Activated naive CD4-positive, alpha-beta T cell treated with anti-CD3 and anti-CD28 coated beads for 36 hours (primary cell): ENCODE measurements at regions of chr14 and their contacts with region 1.

Region 1: GRCh38 chr14:74905375-74906142 is 17.5 kb downstream of the RPS6KL1 start:
- DNase-seq: peak; percentile 87
- H3K4me3 Mint-ChIP-seq: no peak overlapping the region
- H3K27ac Mint-ChIP-seq: no peak overlapping the region
- H3K4me1 Mint-ChIP-seq: peaks cover 5% of the 10 kb centered on the region
- H3K27me3 Mint-ChIP-seq: no peaks in the 10 kb centered on the region

Region 2: GRCh38 chr14:74860906-74861733 is 44.4 kb before region 1 on chr14:
- CTCF ChIA-PET with region 1: interaction called, 379 read pairs
- intact Hi-C with region 1: loop called (anchors 1 kb)
- DNase-seq: peak; percentile 97
- H3K4me3 Mint-ChIP-seq: no peak overlapping the region
- H3K27ac Mint-ChIP-seq: no peak overlapping the region
- H3K4me1 Mint-ChIP-seq: peaks cover 2% of the 10 kb centered on the region
- H3K27me3 Mint-ChIP-seq: no peaks in the 10 kb centered on the region

Region 3: DNA sequence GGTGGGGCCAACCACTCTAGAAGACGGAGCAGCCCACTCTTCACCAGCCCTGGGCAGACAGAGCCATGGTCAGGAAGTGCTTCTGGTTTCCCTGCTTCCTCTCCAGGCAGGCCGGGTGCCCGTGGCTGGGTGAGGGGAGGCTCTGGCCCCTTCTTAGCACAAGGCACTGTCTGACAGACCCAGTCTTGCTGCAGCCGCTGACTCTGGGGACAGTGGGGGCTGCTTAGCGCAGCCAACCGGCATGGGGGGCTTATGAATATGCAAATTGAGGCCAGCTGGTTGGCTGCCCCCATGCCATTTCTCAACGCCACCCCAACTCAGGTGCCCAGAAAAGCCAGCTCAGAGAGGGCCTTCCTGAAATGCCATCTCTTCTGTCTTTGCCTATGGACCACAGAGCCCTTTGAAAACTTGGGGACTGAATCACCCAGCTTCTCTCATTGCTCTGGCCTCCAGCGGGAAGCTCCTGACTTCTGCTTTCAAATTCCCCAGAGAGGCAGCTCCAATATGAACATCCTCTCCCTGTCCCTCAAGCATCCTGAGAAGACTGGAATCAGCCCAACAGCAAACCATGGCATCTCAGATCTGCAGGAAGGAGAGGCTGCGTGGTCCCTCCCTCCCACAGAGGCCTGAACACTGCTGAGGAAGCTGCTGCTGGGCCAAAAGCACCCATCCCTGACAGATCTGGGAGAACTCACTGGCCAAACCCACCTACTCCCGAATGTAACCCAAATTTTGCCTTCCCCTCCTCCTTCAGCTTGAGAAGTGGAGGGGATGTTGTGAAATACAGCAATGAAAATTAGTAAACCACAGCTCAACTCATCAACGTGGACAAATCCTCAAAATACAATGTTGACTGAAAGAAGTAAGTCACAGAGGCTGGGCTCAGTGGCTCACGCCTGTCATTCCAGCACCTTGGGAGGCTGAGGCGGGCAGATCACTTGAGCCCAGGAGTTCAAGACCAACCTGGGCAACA is 29.3 kb before region 1 on chr14 and contains the start of gene PROX2:
- CTCF ChIA-PET with region 1: interaction called, 45 read pairs
- intact Hi-C with region 1: loop called (anchors 1 kb)
- DNase-seq: peak; percentile 30
- H3K4me3 Mint-ChIP-seq: peak within 1 kb of the TSS; percentile 40
- H3K27ac Mint-ChIP-seq: no peak within 1 kb of the TSS
- H3K4me1 Mint-ChIP-seq: peaks cover 38% of the 10 kb centered on the region
- H3K27me3 Mint-ChIP-seq: no peaks in the 10 kb centered on the region
- total RNA-seq, gene PROX2: 0.07 to 0.41 TPM

Region 4: DNA sequence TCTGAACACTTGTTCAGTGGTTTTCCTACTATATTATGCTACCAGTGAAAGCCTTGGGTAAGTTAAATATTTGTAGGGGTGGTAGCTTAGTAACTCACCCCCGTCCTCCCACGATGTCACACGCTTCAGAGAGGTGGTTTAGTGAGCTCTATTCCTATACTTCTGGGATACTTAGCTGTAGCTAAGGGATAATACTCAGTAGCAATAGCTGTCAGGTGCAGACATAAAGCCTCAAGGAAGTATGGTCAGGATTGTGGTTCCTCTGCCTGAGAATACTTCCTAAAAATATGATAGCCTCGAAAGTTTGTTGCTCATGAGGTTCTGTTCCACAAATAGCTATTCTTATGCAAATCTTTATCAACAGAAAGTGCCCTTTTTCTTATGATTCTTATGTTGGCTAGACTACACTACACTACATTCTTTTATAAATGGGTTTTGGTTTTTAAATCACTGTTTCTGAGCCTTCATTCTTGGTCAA is 11.9 kb before region 1 on chr14:
- CTCF ChIA-PET with region 1: interaction called, 75 read pairs
- intact Hi-C with region 1: no loop called
- DNase-seq: no peak
- H3K4me3 Mint-ChIP-seq: no peak overlapping the region
- H3K27ac Mint-ChIP-seq: peak overlapping the region; percentile 16
- H3K4me1 Mint-ChIP-seq: no peaks in the 10 kb centered on the region
- H3K27me3 Mint-ChIP-seq: no peaks in the 10 kb centered on the region

Region 5: GRCh38 chr14:74929242-74929641 is 23.7 kb after region 1 on chr14:
- CTCF ChIA-PET with region 1: interaction called, 18 read pairs
- intact Hi-C with region 1: no loop called
- DNase-seq: no peak
- H3K4me3 Mint-ChIP-seq: no peak overlapping the region
- H3K27ac Mint-ChIP-seq: no peak overlapping the region
- H3K4me1 Mint-ChIP-seq: peaks cover 10% of the 10 kb centered on the region
- H3K27me3 Mint-ChIP-seq: no peaks in the 10 kb centered on the region

Region 6: DNA sequence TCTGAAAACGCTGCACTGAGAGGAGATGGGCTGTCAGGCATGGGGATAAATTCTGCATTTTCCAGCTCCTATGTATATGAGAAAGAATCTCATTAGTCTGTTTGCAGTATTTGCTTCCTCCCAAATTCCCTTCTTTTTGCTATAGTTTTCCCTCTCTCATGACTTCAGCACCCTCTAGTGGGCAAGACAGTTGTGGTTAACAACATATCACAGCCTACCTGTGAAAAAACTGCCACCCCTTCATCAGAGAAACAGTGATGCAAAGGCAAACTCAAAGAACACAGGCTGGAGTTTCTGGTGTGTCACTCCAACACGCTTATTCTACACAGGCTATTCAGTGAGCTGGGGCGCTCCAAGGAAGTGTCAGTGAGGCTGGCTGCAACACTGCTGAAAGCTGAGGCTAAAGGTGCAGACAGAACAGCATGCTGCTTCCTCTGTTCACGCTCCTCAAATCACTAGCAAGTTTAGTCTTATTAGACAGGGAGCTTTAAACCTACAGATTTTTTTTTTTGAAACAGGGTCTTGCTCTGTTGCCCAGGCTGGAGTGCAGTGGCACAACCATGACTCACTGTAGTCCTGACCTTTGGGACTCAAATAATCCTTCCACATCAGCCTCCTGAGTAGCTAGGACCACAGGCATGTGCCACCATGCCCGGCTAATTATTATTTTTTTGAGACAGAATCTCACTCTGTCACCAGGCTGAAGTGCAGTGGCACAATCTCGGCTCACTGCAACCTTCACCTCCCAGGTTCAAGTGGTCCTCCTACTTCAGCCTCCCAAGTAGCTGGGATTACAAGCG is 183.2 kb after region 1 on chr14:
- CTCF ChIA-PET with region 1: interaction called, 10 read pairs
- intact Hi-C with region 1: no loop called
- DNase-seq: peak; percentile 62
- H3K4me3 Mint-ChIP-seq: no peak overlapping the region
- H3K27ac Mint-ChIP-seq: no peak overlapping the region
- H3K4me1 Mint-ChIP-seq: no peaks in the 10 kb centered on the region
- H3K27me3 Mint-ChIP-seq: no peaks in the 10 kb centered on the region

Region 7: GRCh38 chr14:75249251-75249957 is 343.8 kb after region 1 on chr14:
- CTCF ChIA-PET with region 1: no interaction called
- intact Hi-C with region 1: no loop called
- DNase-seq: peak; percentile 90
- H3K4me3 Mint-ChIP-seq: no peak overlapping the region
- H3K27ac Mint-ChIP-seq: peak overlapping the region; percentile 66
- H3K4me1 Mint-ChIP-seq: peaks cover 54% of the 10 kb centered on the region
- H3K27me3 Mint-ChIP-seq: no peaks in the 10 kb centered on the region